ENCODE measurements at regions of chr9 and their contacts with region 1.

Region 1: DNA sequence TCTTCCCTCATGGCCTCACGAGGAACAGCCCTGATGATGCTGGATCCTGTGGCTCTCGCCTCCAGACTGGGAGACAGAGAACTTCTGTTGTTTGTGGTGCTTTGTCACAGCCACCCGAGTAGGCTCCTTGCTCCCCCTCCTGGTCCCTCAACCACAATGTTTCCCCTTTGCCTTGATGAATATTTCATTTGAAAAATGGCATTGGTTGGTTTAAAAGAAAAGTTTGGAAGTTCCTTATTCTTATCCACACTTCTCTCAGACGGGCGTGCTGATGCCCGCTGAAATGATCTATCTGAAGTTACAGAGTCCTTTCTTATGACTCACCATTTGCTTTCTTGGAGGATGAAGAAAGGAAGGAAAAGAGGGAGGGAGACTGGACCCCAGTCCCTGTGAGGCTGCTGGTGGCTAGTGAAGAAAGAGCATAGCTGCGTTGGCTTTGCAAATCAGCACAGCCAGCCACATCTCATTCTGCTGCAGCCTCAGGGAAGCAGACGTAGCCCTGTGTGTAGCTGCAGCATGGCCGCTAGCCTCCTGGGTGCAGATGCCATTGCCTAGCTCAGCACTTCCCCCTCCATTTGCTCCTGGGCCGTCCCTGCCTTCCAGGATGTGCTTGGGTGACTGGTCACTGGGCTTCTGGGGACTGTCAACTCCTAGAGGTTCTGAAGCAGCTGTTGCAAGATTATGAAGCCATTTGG is 185.9 kb downstream of the ERCC6L2 start:
- DNase-seq: peak; percentile 21 to 72 (median 45)
- ATAC-seq: peak; percentile 65
- H3K4me3 ChIP-seq: no peak overlapping the region
- H3K4me3 Mint-ChIP-seq: no peak overlapping the region
- H3K27ac ChIP-seq: no peak overlapping the region
- H3K27ac Mint-ChIP-seq: no peak overlapping the region
- H3K4me1 ChIP-seq: peaks cover 12% of the 10 kb centered on the region
- H3K4me1 Mint-ChIP-seq: no peaks in the 10 kb centered on the region
- H3K27me3 ChIP-seq: no peaks in the 10 kb centered on the region
- H3K27me3 Mint-ChIP-seq: no peaks in the 10 kb centered on the region
- CTCF ChIP-seq: peak; percentile 43

Region 2: GRCh38 chr9:95268681-95269080 is 792.8 kb before region 1 on chr9:
- CTCF ChIA-PET with region 1: no interaction called
- POLR2A ChIA-PET with region 1: no interaction called
- intact Hi-C with region 1: loop called in 1 of 2 experiments (anchors 5 kb)
- DNase-seq: no peak
- ATAC-seq: no peak
- H3K4me3 ChIP-seq: no peak overlapping the region
- H3K4me3 Mint-ChIP-seq: no peak overlapping the region
- H3K27ac ChIP-seq: no peak overlapping the region
- H3K27ac Mint-ChIP-seq: no peak overlapping the region
- H3K4me1 ChIP-seq: peaks cover 2% of the 10 kb centered on the region
- H3K4me1 Mint-ChIP-seq: peaks cover 28% of the 10 kb centered on the region
- H3K27me3 ChIP-seq: no peaks in the 10 kb centered on the region
- H3K27me3 Mint-ChIP-seq: no peaks in the 10 kb centered on the region
- CTCF ChIP-seq: peak; percentile 17

Region 3: DNA sequence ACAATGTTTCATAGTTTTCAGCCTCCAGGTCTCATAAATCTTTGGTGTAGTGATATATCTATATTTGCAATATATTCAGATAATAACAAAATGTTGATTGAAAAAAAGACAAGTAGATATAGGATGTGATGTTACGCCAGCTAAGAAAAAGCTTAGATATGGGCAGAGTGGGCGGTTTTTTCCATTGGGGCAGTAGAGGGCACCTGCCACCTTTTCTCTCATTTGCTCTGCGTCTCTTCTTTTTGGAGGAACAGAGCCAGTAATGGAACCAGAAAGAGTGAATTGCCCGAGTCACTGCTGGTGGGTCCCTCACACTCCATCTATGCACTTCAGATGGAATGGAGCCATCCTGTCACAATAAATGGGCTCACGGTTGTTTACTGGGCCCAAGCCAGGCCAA is 681.8 kb before region 1 on chr9:
- CTCF ChIA-PET with region 1: interaction called, 3 read pairs
- POLR2A ChIA-PET with region 1: no interaction called
- intact Hi-C with region 1: loop called (anchors 1 to 2 kb)
- DNase-seq: peak in 12 of 14 experiments; percentile 1 to 56 (median 6)
- ATAC-seq: no peak
- H3K4me3 ChIP-seq: no peak overlapping the region
- H3K4me3 Mint-ChIP-seq: no peak overlapping the region
- H3K27ac ChIP-seq: no peak overlapping the region
- H3K27ac Mint-ChIP-seq: no peak overlapping the region
- H3K4me1 ChIP-seq: peaks cover 2% of the 10 kb centered on the region
- H3K4me1 Mint-ChIP-seq: no peaks in the 10 kb centered on the region
- H3K27me3 ChIP-seq: peaks cover 15 to 20% of the 10 kb centered on the region in 2 experiments
- H3K27me3 Mint-ChIP-seq: peaks cover 45% of the 10 kb centered on the region
- CTCF ChIP-seq: peak; percentile 56

Region 4: DNA sequence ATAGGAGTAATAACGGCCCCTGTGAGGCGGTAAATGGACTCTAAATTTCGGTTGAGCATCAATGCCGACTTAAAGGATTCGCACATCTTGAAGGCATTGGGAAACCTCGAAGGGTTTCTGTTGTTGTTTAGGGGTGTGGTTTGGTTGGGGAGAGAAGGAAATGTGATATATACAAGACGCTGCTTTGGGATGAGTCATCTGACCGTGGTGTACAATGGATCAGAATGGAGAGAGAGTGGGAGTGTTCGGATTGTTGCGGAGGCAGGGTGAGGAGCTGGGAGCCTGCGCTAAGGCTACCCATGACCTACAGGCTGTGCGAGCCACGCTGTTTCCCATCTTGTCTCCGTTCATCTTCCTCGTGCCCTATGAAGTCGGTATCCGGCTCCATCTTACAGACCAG is 246.3 kb before region 1 on chr9:
- CTCF ChIA-PET with region 1: no interaction called
- POLR2A ChIA-PET with region 1: no interaction called
- intact Hi-C with region 1: loop called in 1 of 2 experiments (anchors 10 kb)
- DNase-seq: no peak
- ATAC-seq: no peak
- H3K4me3 ChIP-seq: no peak overlapping the region
- H3K4me3 Mint-ChIP-seq: no peak overlapping the region
- H3K27ac ChIP-seq: no peak overlapping the region
- H3K27ac Mint-ChIP-seq: no peak overlapping the region
- H3K4me1 ChIP-seq: no peaks in the 10 kb centered on the region
- H3K4me1 Mint-ChIP-seq: no peaks in the 10 kb centered on the region
- H3K27me3 ChIP-seq: no peaks in the 10 kb centered on the region
- H3K27me3 Mint-ChIP-seq: no peaks in the 10 kb centered on the region
- CTCF ChIP-seq: no peak

Region 5: GRCh38 chr9:95970317-95970716 is 91.1 kb before region 1 on chr9:
- CTCF ChIA-PET with region 1: no interaction called
- POLR2A ChIA-PET with region 1: no interaction called
- intact Hi-C with region 1: no loop called
- DNase-seq: no peak
- ATAC-seq: no peak
- H3K4me3 ChIP-seq: no peak overlapping the region
- H3K4me3 Mint-ChIP-seq: no peak overlapping the region
- H3K27ac ChIP-seq: no peak overlapping the region
- H3K27ac Mint-ChIP-seq: no peak overlapping the region
- H3K4me1 ChIP-seq: no peaks in the 10 kb centered on the region
- H3K4me1 Mint-ChIP-seq: no peaks in the 10 kb centered on the region
- H3K27me3 ChIP-seq: no peaks in the 10 kb centered on the region
- H3K27me3 Mint-ChIP-seq: no peaks in the 10 kb centered on the region
- CTCF ChIP-seq: no peak

Region 6: DNA sequence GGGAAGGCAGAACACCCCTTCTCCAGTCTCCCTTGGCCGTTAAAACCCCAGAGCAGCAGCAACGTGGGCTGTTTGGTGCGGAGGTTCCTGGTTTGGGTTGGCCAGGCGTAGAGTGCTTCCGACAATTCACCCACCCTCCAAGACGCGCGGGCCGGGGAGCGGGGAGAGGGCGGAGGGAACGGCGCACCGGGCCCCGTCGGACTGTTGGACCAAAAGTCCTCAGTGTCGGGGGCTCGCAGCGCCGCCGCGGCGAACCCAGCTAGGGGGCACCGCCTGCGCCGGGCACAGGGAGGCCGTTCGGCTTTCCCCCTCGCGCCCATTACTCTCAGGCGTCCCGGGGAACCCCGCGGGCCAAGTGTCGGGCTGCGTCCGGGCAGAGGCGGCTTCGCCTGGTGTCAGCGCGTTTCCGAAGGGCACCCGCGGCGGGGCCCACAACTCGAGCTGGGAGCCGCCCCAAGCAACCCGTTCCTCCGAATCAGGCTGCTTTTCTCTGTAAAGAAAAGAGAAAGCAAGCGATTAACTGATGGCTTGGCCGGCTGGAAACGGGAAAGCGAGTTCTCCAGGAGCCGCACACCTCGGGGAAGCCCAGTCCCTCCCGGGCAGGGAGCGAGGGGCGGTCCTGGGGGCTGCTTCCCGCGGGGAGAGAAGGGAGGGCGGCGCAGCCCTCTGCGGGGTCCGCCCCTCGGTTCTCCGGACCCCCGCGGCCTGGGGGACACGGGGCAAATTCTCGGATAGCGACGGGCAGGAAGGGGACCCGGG is 40.5 kb before region 1 on chr9:
- CTCF ChIA-PET with region 1: no interaction called
- POLR2A ChIA-PET with region 1: no interaction called
- intact Hi-C with region 1: no loop called
- DNase-seq: peak in 13 of 14 experiments; percentile 27 to 69 (median 41)
- ATAC-seq: peak; percentile 55
- H3K4me3 ChIP-seq: peak overlapping the region; percentile 67
- H3K4me3 Mint-ChIP-seq: peak overlapping the region; percentile 88
- H3K27ac ChIP-seq: peak overlapping the region in 1 of 2 donors; percentile 25
- H3K27ac Mint-ChIP-seq: no peak overlapping the region
- H3K4me1 ChIP-seq: peaks cover 55% of the 10 kb centered on the region
- H3K4me1 Mint-ChIP-seq: peaks cover 59% of the 10 kb centered on the region
- H3K27me3 ChIP-seq: peaks cover 13 to 16% of the 10 kb centered on the region in 2 experiments
- H3K27me3 Mint-ChIP-seq: peaks cover 52% of the 10 kb centered on the region
- CTCF ChIP-seq: no peak

Measured in CD4-positive, alpha-beta T cell (primary cell).